WTC11 (cell line): ENCODE measurements at regions of chr7 and their contacts with region 1.

Region 1: GRCh38 chr7:29408841-29409243 is 154.8 kb upstream of the PRR15 start:
- DNase-seq: peak; percentile 34
- ATAC-seq: peak; percentile 60
- H3K4me3 Mint-ChIP-seq: peak overlapping the region; percentile 33; the same call in 1 of the 2 replicates
- H3K27ac Mint-ChIP-seq: no peak overlapping the region
- H3K4me1 Mint-ChIP-seq: peaks cover 19% of the 10 kb centered on the region
- H3K27me3 Mint-ChIP-seq: no peaks in the 10 kb centered on the region
- CTCF ChIP-seq: peak; percentile 84

Region 2: GRCh38 chr7:29113384-29114103 is 295.3 kb before region 1 on chr7:
- CTCF ChIA-PET with region 1: interaction called, 36 read pairs
- POLR2A ChIA-PET with region 1: no interaction called
- DNase-seq: peak; percentile 28
- ATAC-seq: peak; percentile 92
- H3K4me3 Mint-ChIP-seq: no peak overlapping the region
- H3K27ac Mint-ChIP-seq: peak overlapping the region; percentile 66
- H3K4me1 Mint-ChIP-seq: peaks cover 33% of the 10 kb centered on the region
- H3K27me3 Mint-ChIP-seq: no peaks in the 10 kb centered on the region
- CTCF ChIP-seq: no peak

Region 3: DNA sequence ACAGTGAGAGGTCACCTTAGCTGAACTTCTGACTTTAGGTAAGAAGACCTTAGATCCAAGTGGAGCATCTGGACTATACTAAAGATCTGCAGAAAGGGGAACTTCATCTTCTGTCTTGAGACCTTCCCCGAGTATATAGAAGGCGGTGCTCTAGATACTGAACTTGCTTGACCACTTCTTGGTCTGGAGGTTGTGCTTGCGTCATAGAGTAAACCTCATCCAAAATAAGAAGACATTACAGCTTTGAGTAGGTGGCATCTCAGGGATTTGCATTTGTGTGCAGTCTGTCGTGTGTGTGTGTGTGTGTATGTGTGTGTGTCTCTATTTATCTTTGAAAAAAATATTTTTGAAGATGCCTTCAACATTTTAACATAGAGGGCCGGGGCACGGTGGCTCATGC is 56.8 kb before region 1 on chr7:
- CTCF ChIA-PET with region 1: no interaction called
- POLR2A ChIA-PET with region 1: no interaction called
- DNase-seq: no peak
- ATAC-seq: no peak
- H3K4me3 Mint-ChIP-seq: no peak overlapping the region
- H3K27ac Mint-ChIP-seq: no peak overlapping the region
- H3K4me1 Mint-ChIP-seq: peaks cover 4% of the 10 kb centered on the region
- H3K27me3 Mint-ChIP-seq: no peaks in the 10 kb centered on the region
- CTCF ChIP-seq: no peak

Region 4: DNA sequence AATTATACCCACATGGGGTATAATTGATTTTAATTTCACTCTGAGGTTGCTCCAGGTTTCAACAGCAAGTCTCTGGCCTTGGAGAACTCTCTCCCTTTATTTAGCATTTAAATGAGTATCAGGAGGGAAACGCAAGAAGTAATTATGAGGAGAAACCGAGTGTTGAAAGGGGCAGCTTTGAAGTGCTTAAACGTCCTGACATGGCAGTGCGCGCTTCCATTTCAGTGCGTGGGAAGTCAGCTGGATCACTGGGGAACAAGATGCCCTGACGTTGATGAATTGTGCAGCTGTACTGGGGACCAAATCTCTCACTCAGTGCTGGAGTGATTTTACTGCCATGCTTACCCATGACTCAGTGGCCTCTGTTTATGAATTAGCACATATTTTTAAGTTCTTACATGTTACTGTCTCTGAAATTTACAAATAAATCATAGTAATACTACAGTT is 48.7 kb after region 1 on chr7:
- CTCF ChIA-PET with region 1: no interaction called
- POLR2A ChIA-PET with region 1: no interaction called
- DNase-seq: no peak
- ATAC-seq: no peak
- H3K4me3 Mint-ChIP-seq: no peak overlapping the region
- H3K27ac Mint-ChIP-seq: no peak overlapping the region
- H3K4me1 Mint-ChIP-seq: peaks cover 25% of the 10 kb centered on the region
- H3K27me3 Mint-ChIP-seq: no peaks in the 10 kb centered on the region
- CTCF ChIP-seq: no peak

Region 5: DNA sequence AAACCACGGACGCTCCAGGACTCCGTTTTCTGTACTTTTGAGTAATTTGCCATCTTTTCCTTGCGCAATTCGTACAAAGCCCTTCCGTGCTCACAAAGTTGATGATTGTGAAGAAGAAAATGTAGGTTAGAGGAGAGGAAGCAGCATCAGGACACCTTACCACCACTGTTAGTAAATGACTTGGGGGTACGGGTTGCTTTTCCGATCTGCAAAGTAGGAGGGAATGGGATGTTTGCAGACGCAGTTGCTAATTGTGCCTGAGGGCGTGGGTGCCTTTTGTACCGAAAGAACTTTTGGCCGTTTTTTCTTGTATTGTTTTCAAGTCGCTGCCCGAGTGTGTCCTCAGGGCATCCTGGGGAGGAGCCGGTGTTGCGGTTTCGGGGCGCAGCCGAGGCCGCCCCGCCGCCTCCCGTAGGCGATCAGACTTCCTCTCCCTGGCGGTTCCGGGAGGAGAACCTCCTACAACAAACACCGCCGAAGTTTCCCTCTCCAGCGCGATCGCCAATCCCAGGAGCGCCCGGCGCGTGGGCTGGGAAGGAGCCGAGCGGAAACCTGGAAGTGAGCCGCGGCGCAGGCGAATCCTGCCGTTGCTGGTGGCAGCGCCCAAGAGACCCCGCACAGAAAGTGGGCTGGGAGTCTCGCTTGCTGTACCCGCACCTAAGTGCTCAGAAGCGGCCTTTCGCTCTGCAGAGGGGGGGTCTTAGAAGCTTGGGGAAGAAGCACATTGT is 155.8 kb after region 1 on chr7:
- CTCF ChIA-PET with region 1: no interaction called
- POLR2A ChIA-PET with region 1: no interaction called
- DNase-seq: peak; percentile 53
- ATAC-seq: peak; percentile 6
- H3K4me3 Mint-ChIP-seq: peak overlapping the region; percentile 90
- H3K27ac Mint-ChIP-seq: peak overlapping the region; percentile 81
- H3K4me1 Mint-ChIP-seq: peaks cover 54% of the 10 kb centered on the region
- H3K27me3 Mint-ChIP-seq: peaks cover 20% of the 10 kb centered on the region
- CTCF ChIP-seq: no peak